T-cell (primary cell): ENCODE measurements at regions of chr11 and their contacts with region 1.

Region 1: GRCh38 chr11:120172054-120172911 is 34.4 kb upstream of the TRIM29 start:
- DNase-seq: peak in 28 of 35 experiments; percentile 7 to 57 (median 26)
- ATAC-seq: peak; percentile 24 to 55 (median 42)
- H3K4me3 ChIP-seq: no peak overlapping the region
- H3K4me3 Mint-ChIP-seq: peak overlapping the region in 1 of 3 donors; percentile 24
- H3K27ac ChIP-seq: no peak overlapping the region
- H3K27ac Mint-ChIP-seq: no peak overlapping the region
- H3K4me1 ChIP-seq: peaks cover 0 to 20% of the 10 kb centered on the region in 2 experiments
- H3K4me1 Mint-ChIP-seq: peaks cover 4 to 9% (median 5%) of the 10 kb centered on the region in 3 donors
- H3K27me3 ChIP-seq: peaks cover 4 to 66% of the 10 kb centered on the region in 2 experiments
- H3K27me3 Mint-ChIP-seq: peaks cover 49 to 70% of the 10 kb centered on the region in 2 donors

Region 2: GRCh38 chr11:120229451-120230424 is 57.5 kb after region 1 on chr11:
- CTCF ChIA-PET with region 1: interaction called in 1 of 2 experiments, 10 read pairs
- POLR2A ChIA-PET with region 1: no interaction called
- DNase-seq: peak in 2 of 35 experiments; percentile 9 to 37
- ATAC-seq: no peak
- H3K4me3 ChIP-seq: no peak overlapping the region
- H3K4me3 Mint-ChIP-seq: no peak overlapping the region
- H3K27ac ChIP-seq: no peak overlapping the region
- H3K27ac Mint-ChIP-seq: no peak overlapping the region
- H3K4me1 ChIP-seq: peaks cover 0 to 2% of the 10 kb centered on the region in 2 experiments
- H3K4me1 Mint-ChIP-seq: peaks cover 5 to 6% (median 6%) of the 10 kb centered on the region in 3 donors
- H3K27me3 ChIP-seq: peaks cover 0 to 47% of the 10 kb centered on the region in 2 experiments
- H3K27me3 Mint-ChIP-seq: peaks cover 5 to 19% of the 10 kb centered on the region in 2 donors

Region 3: GRCh38 chr11:120272303-120272702 is 100.0 kb after region 1 on chr11:
- CTCF ChIA-PET with region 1: no interaction called
- POLR2A ChIA-PET with region 1: no interaction called
- DNase-seq: no peak
- ATAC-seq: no peak
- H3K4me3 ChIP-seq: no peak overlapping the region
- H3K4me3 Mint-ChIP-seq: no peak overlapping the region
- H3K27ac ChIP-seq: no peak overlapping the region
- H3K27ac Mint-ChIP-seq: no peak overlapping the region
- H3K4me1 ChIP-seq: no peaks in the 10 kb centered on the region
- H3K4me1 Mint-ChIP-seq: no peaks in the 10 kb centered on the region
- H3K27me3 ChIP-seq: peaks cover 0 to 21% of the 10 kb centered on the region in 2 experiments
- H3K27me3 Mint-ChIP-seq: peaks cover 21 to 28% of the 10 kb centered on the region in 2 donors